OCI-LY7 (cell line): ENCODE measurements at regions of chr6 and their contacts with region 1.

Region 1: DNA sequence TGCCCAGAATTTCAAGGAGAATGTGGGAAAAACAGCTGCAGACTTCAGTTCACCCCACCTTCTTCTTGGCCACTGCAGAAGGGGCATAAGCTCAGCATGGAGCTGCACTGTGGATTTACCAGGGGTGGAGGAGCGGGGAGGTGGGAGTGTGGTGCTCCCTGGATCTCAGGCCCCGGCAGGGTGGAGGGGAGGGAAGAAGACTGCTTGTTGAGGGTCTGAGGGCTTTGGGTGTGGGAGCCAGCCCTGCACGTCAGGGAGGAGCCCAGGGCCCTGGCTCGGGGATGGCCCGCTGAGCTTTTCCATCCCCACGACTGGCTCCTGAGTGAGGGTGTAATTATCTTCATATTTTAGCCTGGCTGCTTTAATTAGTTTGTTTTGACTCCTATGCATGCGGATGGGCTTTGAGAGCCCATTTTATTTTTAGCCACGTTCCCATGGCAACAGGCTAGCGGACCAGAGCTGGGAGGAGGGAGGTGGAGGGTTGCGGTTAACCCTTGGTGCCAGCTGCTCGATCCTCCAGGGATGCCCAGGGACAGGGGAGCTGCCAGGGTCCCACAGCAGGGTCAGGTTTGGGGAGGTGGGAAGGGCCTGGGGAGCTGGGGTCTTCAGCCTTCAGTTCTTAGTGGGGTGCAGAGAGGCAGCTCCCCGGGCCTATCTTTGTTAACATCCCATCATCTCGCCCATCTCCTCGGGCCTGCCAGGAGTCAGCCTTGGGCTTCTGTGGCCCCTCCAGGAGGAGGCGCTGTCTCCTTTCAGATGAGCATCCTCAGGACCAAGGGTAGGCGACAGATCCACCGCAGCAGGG is 68.2 kb downstream of the RAB44 start:
- DNase-seq: peak; percentile 91
- H3K4me3 ChIP-seq: peak overlapping the region; percentile 2
- H3K27ac ChIP-seq: peak overlapping the region; percentile 4
- H3K4me1 ChIP-seq: peaks cover 45% of the 10 kb centered on the region
- CTCF ChIP-seq: peak; percentile 99

Region 2: DNA sequence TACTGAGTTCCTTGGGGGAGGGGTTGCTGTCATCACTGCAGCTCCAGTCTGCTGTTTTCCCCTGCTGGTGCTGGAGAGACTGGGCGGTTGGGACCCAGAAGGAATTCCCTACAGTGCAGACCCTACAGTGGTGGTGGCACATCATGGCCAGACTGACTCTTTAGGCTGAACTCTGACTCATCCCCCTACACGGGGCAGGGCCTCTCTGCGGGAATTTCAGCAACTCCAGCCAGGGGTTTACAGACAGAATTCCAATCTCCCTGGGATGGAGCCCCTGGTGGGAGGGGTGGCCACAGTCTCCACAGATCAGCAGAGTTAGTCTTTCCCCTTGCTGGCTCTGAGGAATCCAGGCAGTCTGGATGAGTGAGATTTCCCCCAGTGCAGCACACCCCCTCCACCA is 682.4 kb before region 1 on chr6:
- CTCF ChIA-PET with region 1: no interaction called
- POLR2A ChIA-PET with region 1: no interaction called
- intact Hi-C with region 1: no loop called
- DNase-seq: no peak
- H3K4me3 ChIP-seq: no peak overlapping the region
- H3K27ac ChIP-seq: no peak overlapping the region
- H3K4me1 ChIP-seq: peaks cover 14% of the 10 kb centered on the region
- CTCF ChIP-seq: no peak

Region 3: GRCh38 chr6:36642913-36643817 is 122.6 kb before region 1 on chr6:
- CTCF ChIA-PET with region 1: no interaction called
- POLR2A ChIA-PET with region 1: no interaction called
- intact Hi-C with region 1: no loop called
- DNase-seq: no peak
- H3K4me3 ChIP-seq: no peak overlapping the region
- H3K27ac ChIP-seq: no peak overlapping the region
- H3K4me1 ChIP-seq: peaks cover 18% of the 10 kb centered on the region
- CTCF ChIP-seq: no peak

Region 4: GRCh38 chr6:36685936-36686667 is 79.7 kb before region 1 on chr6:
- CTCF ChIA-PET with region 1: no interaction called
- POLR2A ChIA-PET with region 1: no interaction called
- intact Hi-C with region 1: no loop called
- DNase-seq: no peak
- H3K4me3 ChIP-seq: no peak overlapping the region
- H3K27ac ChIP-seq: no peak overlapping the region
- H3K4me1 ChIP-seq: peaks cover 40% of the 10 kb centered on the region
- CTCF ChIP-seq: no peak

Region 5: GRCh38 chr6:36851149-36851614 is 85.4 kb after region 1 on chr6:
- CTCF ChIA-PET with region 1: interaction called, 9 read pairs
- POLR2A ChIA-PET with region 1: interaction called, 6 read pairs
- intact Hi-C with region 1: loop called (anchors 1 kb)
- DNase-seq: peak; percentile 71
- H3K4me3 ChIP-seq: no peak overlapping the region
- H3K27ac ChIP-seq: no peak overlapping the region
- H3K4me1 ChIP-seq: no peaks in the 10 kb centered on the region
- CTCF ChIP-seq: peak; percentile 98